Mucosa of descending colon (tissue), 3 donors: ENCODE measurements at regions of chr1 and their contacts with region 1.

Region 1: GRCh38 chr1:230797942-230798418 is 50.8 kb downstream of the CAPN9 start:
- DNase-seq: peak in 2 of 3 donors; percentile 34 to 44
- ATAC-seq: peak; percentile 70
- H3K4me3 ChIP-seq: no peak overlapping the region
- H3K4me1 ChIP-seq: no peaks in the 10 kb centered on the region
- CTCF ChIP-seq: no peak

Region 2: GRCh38 chr1:230917284-230918135 is 119.5 kb after region 1 on chr1:
- intact Hi-C with region 1: loop called in 1 of 2 experiments (anchors 5 kb)
- DNase-seq: peak in 2 of 3 donors; percentile 65 to 98
- ATAC-seq: peak; percentile 89
- H3K4me3 ChIP-seq: no peak overlapping the region
- H3K4me1 ChIP-seq: no peaks in the 10 kb centered on the region
- CTCF ChIP-seq: peak; percentile 52

Region 3: GRCh38 chr1:231200388-231201031 is 402.5 kb after region 1 on chr1:
- intact Hi-C with region 1: loop called in 1 of 2 experiments (anchors 10 kb)
- DNase-seq: no peak
- ATAC-seq: no peak
- H3K4me3 ChIP-seq: no peak overlapping the region
- H3K4me1 ChIP-seq: no peaks in the 10 kb centered on the region
- CTCF ChIP-seq: no peak